ENCODE measurements at regions of chr17 and their contacts with region 1.

Region 1: DNA sequence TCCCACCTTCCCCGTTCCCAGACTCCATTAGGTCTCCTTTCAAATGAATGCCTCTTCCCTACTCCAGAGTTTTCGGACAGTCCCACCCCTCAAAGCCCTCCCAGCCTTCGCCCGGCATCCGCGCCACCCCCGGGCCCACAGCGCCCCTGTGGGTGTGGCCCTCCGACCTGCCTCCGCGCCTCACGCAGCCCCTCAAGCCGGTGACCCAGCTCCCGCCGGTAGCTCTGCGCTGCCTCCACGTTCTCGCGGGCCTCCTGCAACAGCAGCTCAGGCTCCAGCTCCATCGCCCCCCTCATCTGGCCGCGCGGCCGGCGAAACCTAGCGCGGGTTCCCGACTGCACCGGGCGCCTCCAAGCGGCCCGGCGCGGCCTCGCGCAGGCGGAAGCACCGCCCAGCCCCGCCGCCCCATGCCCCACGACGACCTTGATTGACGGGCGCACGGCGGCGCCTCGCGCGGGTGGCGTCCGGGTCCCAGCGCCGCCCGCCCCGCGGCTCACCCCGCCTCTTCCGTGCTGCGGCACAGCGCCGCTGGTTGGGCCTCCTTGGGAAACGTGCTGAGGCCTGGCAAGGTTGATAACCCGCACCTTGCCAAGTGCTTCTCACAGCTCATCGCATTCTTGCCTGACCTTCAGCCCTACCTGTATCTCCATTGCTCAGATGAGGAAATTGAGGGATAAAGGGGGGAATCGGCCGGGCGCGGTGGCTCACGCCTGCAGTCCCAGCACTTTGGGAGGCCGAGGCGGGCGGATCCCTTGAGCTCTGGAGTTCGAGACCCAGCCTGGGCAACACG is at the start of gene CRLF3:
- DNase-seq: peak; percentile 90
- H3K4me3 Mint-ChIP-seq: peak within 1 kb of the TSS; percentile 100
- H3K27ac Mint-ChIP-seq: peak within 1 kb of the TSS; percentile 89
- H3K4me1 Mint-ChIP-seq: peaks cover 30% of the 10 kb centered on the region
- H3K27me3 Mint-ChIP-seq: no peaks in the 10 kb centered on the region
- total RNA-seq, gene CRLF3: 45.6 and 49.5 TPM in 2 replicates

Region 2: GRCh38 chr17:30477083-30477773 is 347.3 kb before region 1 on chr17 and contains the start of gene GOSR1:
- intact Hi-C with region 1: loop called (anchors 5 kb)
- DNase-seq: peak; percentile 87
- H3K4me3 Mint-ChIP-seq: peak within 1 kb of the TSS; percentile 98
- H3K27ac Mint-ChIP-seq: peak within 1 kb of the TSS; percentile 98
- H3K4me1 Mint-ChIP-seq: peaks cover 34% of the 10 kb centered on the region
- H3K27me3 Mint-ChIP-seq: no peaks in the 10 kb centered on the region
- total RNA-seq, gene GOSR1: 61.5 and 66.6 TPM in 2 replicates

Region 3: GRCh38 chr17:30761058-30761457 is 63.5 kb before region 1 on chr17:
- intact Hi-C with region 1: no loop called
- DNase-seq: no peak
- H3K4me3 Mint-ChIP-seq: no peak overlapping the region
- H3K27ac Mint-ChIP-seq: peak overlapping the region; percentile 48
- H3K4me1 Mint-ChIP-seq: peaks cover 10% of the 10 kb centered on the region
- H3K27me3 Mint-ChIP-seq: no peaks in the 10 kb centered on the region

Region 4: DNA sequence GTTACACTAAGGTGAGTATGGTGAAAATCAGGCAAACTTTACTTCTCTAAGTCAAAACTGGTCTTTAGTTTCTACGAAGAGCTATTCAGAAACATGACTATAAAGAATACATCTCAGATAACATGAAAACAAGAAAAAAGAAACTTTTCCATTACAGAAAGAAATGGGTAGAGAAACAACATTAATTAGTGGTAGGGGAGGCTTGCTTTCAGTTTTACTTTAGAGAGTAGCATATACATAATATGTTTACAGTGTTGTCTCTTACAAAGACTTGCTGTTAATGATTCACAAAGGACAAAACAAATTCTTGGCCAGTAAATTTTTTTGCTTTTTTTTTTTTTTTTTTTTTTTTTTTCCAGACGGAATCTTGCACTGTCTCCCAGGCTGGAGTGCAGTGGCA is 34.3 kb before region 1 on chr17:
- intact Hi-C with region 1: loop called (anchors 1 kb)
- DNase-seq: no peak
- H3K4me3 Mint-ChIP-seq: no peak overlapping the region
- H3K27ac Mint-ChIP-seq: peak overlapping the region; percentile 83
- H3K4me1 Mint-ChIP-seq: peaks cover 16% of the 10 kb centered on the region
- H3K27me3 Mint-ChIP-seq: no peaks in the 10 kb centered on the region

Region 5: DNA sequence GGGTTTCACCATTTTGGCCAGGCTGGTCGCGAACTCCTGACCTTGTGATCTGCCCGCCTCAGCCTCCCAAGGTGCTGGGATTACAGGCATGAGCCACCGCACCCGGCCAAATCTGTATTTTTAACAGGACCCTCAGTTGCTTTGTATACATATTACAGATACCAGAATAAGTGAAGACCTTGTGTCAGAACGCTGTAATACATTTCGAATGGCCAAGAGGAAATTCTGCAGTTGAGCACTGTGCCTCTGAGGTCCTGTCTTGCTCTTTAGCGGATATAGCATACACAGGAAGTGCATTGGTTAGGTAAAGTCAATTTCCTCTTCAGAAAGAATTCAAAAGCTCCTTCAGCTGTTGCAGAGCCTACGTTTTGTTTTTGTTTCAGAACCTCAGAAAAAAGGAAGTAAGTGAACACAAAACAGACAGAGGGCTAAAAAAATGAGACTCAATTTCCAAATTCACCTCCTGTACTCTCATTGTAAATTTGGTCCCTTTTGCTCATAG is 15.7 kb before region 1 on chr17:
- intact Hi-C with region 1: loop called (anchors 1 kb)
- DNase-seq: peak; percentile 50
- H3K4me3 Mint-ChIP-seq: peak overlapping the region; percentile 83
- H3K27ac Mint-ChIP-seq: peak overlapping the region; percentile 94
- H3K4me1 Mint-ChIP-seq: peaks cover 71% of the 10 kb centered on the region
- H3K27me3 Mint-ChIP-seq: no peaks in the 10 kb centered on the region

Region 6: DNA sequence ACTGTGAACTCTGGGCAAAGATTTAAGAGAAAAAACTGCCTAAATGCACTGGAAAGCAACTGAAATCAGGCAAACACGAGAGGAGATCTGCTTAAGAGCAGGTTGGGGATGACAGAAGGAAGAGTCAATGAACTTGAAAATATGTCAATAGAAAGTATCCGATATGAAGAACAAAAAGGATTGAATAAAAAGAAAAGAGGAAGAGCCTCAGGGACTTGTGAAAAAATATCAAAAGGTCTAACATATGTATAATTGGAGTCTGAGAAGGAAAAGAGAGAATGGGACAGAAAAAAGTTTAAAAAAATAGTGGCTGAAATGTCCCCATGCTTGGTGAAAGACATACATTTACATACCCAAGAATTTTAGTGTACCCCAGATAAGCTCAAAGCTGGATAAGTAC is 839.0 kb after region 1 on chr17:
- intact Hi-C with region 1: no loop called
- DNase-seq: no peak
- H3K4me3 Mint-ChIP-seq: no peak overlapping the region
- H3K27ac Mint-ChIP-seq: peak overlapping the region; percentile 1
- H3K4me1 Mint-ChIP-seq: peaks cover 15% of the 10 kb centered on the region
- H3K27me3 Mint-ChIP-seq: peaks cover 9% of the 10 kb centered on the region

Measured in activated T-helper 1 cell treated with anti-CD3 and anti-CD28 coated beads, Interleukin-12 subunit alpha, Interleukin-12 subunit beta, Interleukin-2, Interleukin-4 antibody, amounts not matched to agents 30 ng/mL and 10 ng/mL and 1 ng/mL, durations not matched to agents 14 hours and 24 hours and 36 hours (primary cell).